ENCODE measurements at regions of chr11 and their contacts with region 1.

Region 1: DNA sequence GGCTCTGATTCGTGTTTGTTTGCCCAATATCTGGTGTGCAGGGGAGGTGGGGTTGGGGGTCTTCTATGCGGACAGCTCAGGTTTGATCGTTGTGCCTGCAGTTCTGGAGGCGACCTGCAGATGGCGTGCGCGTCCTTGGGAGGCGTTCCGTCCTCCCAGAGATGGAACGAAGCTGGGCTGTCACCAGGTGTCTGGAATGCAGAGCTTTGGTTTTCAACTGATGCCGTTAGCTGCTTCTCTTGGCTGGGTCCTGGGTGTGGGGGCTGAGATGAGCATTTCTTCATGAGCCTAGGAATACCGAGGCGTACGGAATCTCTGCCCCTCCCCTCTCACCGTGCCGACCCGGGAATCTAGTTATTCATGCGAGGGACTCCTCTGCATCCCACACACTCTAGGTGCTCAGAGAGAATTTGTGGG is 98.6 kb downstream of the CEP164 start:
- DNase-seq: peak; percentile 80
- H3K4me3 Mint-ChIP-seq: no peak overlapping the region
- H3K27ac Mint-ChIP-seq: no peak overlapping the region
- H3K4me1 Mint-ChIP-seq: peaks cover 4% of the 10 kb centered on the region
- H3K27me3 Mint-ChIP-seq: no peaks in the 10 kb centered on the region

Region 2: DNA sequence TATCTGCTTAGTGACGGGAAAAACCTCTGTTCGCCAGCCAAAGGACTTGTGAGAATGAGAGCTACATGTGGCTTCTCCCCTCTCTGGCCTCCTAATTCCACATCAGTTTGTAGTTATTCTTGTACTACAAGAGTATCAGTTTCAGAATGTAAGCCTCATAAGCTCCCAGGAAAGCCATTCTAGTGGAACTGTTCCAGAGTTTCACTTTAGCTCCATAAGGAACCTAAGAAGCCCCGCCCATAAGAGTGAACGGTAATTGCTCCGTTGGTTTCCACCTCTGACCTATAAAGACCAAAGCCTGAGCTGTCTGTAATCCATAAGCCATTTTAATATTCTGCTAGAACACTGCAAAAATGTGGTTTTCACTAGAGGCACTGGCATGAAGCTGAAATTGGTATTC is 381.1 kb before region 1 on chr11:
- CTCF ChIA-PET with region 1: no interaction called
- POLR2A ChIA-PET with region 1: no interaction called
- intact Hi-C with region 1: no loop called
- DNase-seq: no peak
- H3K4me3 Mint-ChIP-seq: no peak overlapping the region
- H3K27ac Mint-ChIP-seq: no peak overlapping the region
- H3K4me1 Mint-ChIP-seq: peaks cover 59% of the 10 kb centered on the region
- H3K27me3 Mint-ChIP-seq: no peaks in the 10 kb centered on the region

Region 3: DNA sequence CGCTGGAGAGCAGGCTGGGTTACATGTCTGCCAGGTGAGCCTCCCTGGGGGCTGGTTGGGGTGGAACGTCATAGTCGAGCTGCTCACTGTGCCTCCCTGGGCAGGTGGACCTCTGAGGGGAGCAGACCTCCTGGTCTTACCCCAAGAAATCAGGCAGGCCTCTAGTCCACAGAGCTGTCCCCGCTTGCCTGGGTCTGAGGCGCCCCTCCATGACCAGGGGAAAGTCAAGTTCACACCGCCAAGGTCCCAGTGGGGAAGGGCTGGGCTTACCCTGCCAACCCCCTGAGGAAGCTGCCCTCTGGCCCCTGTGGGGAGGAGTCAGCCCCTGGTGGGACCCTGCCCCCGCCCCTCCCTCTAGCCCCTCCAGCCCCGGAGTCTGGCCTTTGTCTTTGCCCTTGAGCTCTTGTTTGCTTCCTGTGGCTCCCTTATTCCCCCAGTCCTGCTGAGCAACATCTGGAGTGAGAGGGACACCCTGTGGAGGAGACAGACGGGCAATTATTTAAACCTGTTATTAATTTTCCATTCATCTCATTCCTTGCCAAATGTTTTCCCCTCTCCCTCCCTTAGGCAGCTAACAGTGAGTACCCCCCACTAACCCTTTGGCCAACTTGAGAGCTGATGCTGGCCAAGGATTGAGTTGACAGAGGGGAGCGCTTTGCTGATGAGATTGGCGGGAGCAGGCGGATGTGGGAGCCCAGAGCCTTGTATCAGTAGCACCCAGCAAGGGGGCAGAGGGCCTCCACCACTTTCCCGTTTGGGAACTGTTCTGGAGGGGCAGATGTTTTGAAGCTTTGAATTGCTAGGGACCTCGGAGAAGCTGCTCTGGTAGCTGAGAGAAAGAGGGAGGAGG is 15.2 kb before region 1 on chr11:
- CTCF ChIA-PET with region 1: interaction called, 31 read pairs
- POLR2A ChIA-PET with region 1: no interaction called
- intact Hi-C with region 1: no loop called
- DNase-seq: no peak
- H3K4me3 Mint-ChIP-seq: no peak overlapping the region
- H3K27ac Mint-ChIP-seq: no peak overlapping the region
- H3K4me1 Mint-ChIP-seq: no peaks in the 10 kb centered on the region
- H3K27me3 Mint-ChIP-seq: no peaks in the 10 kb centered on the region

Region 4: DNA sequence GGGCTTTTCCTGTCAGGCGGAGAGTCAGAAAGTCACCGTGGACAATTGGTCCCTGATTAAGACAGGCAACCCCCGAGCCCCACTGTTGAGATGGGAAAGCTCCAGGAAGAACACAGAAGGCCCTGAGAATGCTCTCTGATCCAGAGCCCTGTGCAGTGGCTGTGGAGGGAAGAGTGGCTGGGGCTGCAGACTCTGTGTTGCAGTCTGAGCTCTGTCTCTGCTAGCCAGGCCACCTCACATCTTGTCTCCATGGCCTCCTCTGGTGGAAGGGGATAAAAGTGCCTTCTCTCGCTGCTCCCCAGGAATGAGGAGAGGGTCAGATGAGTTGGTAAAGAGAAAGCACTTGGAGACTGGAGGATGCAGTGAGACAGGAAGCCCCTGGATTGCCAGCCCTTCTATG is 42.6 kb after region 1 on chr11:
- CTCF ChIA-PET with region 1: interaction called, 26 read pairs
- POLR2A ChIA-PET with region 1: no interaction called
- intact Hi-C with region 1: no loop called
- DNase-seq: peak; percentile 20
- H3K4me3 Mint-ChIP-seq: no peak overlapping the region
- H3K27ac Mint-ChIP-seq: no peak overlapping the region
- H3K4me1 Mint-ChIP-seq: no peaks in the 10 kb centered on the region
- H3K27me3 Mint-ChIP-seq: peaks cover 2% of the 10 kb centered on the region

Region 5: GRCh38 chr11:117489999-117490679 is 63.9 kb after region 1 on chr11:
- CTCF ChIA-PET with region 1: interaction called, 12 read pairs
- POLR2A ChIA-PET with region 1: no interaction called
- intact Hi-C with region 1: no loop called
- DNase-seq: no peak
- H3K4me3 Mint-ChIP-seq: no peak overlapping the region
- H3K27ac Mint-ChIP-seq: no peak overlapping the region
- H3K4me1 Mint-ChIP-seq: peaks cover 3% of the 10 kb centered on the region
- H3K27me3 Mint-ChIP-seq: peaks cover 12% of the 10 kb centered on the region

Region 6: DNA sequence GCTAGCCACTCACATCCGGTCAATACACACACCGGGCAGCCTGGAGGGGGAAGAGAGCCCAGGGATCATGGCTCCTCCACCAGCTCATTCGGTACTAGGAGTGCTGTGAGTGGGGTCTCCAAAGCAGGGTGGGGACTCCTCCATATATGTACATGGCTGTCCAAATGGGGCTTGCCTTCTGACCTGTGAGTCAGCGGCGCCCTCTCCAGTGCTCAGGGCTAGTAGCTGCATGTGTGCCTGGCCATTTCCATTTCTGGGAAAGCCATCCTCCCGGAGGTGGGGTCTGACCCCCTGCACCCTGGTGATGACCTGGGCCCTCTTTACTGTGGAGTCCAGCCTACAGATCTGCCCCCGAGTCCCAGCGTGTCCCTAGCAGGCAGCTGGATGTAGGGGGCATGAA is 83.3 kb after region 1 on chr11:
- CTCF ChIA-PET with region 1: interaction called, 14 read pairs
- POLR2A ChIA-PET with region 1: no interaction called
- intact Hi-C with region 1: loop called (anchors 10 kb)
- DNase-seq: no peak
- H3K4me3 Mint-ChIP-seq: no peak overlapping the region
- H3K27ac Mint-ChIP-seq: no peak overlapping the region
- H3K4me1 Mint-ChIP-seq: no peaks in the 10 kb centered on the region
- H3K27me3 Mint-ChIP-seq: peaks cover 11% of the 10 kb centered on the region

Region 7: GRCh38 chr11:117621226-117621625 is 194.9 kb after region 1 on chr11:
- CTCF ChIA-PET with region 1: interaction called, 142 read pairs
- POLR2A ChIA-PET with region 1: no interaction called
- intact Hi-C with region 1: loop called (anchors 1 kb)
- DNase-seq: peak; percentile 41
- H3K4me3 Mint-ChIP-seq: no peak overlapping the region
- H3K27ac Mint-ChIP-seq: no peak overlapping the region
- H3K4me1 Mint-ChIP-seq: no peaks in the 10 kb centered on the region
- H3K27me3 Mint-ChIP-seq: peaks cover 5% of the 10 kb centered on the region

Region 8: GRCh38 chr11:117807482-117808327 is 381.4 kb after region 1 on chr11:
- CTCF ChIA-PET with region 1: interaction called, 33 read pairs
- POLR2A ChIA-PET with region 1: no interaction called
- intact Hi-C with region 1: loop called (anchors 5 kb)
- DNase-seq: peak; percentile 84
- H3K4me3 Mint-ChIP-seq: no peak overlapping the region
- H3K27ac Mint-ChIP-seq: no peak overlapping the region
- H3K4me1 Mint-ChIP-seq: peaks cover 17% of the 10 kb centered on the region
- H3K27me3 Mint-ChIP-seq: peaks cover 2% of the 10 kb centered on the region

Measured in activated CD4-positive, alpha-beta memory T cell treated with anti-CD3 and anti-CD28 coated beads for 36 hours (primary cell).